MCF 10A (cell line): ENCODE measurements at regions of chr12 and their contacts with region 1.

Region 1: GRCh38 chr12:82685790-82686167 is 927 bp upstream of the TMTC2 start:
- DNase-seq: peak; percentile 96
- H3K4me3 Mint-ChIP-seq: peak overlapping the region; percentile 85
- H3K27ac Mint-ChIP-seq: no peak overlapping the region
- H3K4me1 Mint-ChIP-seq: peaks cover 16% of the 10 kb centered on the region
- H3K27me3 Mint-ChIP-seq: no peaks in the 10 kb centered on the region
- CTCF ChIP-seq: peak; percentile 77

Region 2: GRCh38 chr12:82645414-82645813 is 40.4 kb before region 1 on chr12:
- CTCF ChIA-PET with region 1: interaction called, 12 read pairs
- POLR2A ChIA-PET with region 1: interaction called, 4 read pairs
- intact Hi-C with region 1: no loop called
- DNase-seq: no peak
- H3K4me3 Mint-ChIP-seq: no peak overlapping the region
- H3K27ac Mint-ChIP-seq: no peak overlapping the region
- H3K4me1 Mint-ChIP-seq: peaks cover 9% of the 10 kb centered on the region
- H3K27me3 Mint-ChIP-seq: no peaks in the 10 kb centered on the region
- CTCF ChIP-seq: no peak

Region 3: DNA sequence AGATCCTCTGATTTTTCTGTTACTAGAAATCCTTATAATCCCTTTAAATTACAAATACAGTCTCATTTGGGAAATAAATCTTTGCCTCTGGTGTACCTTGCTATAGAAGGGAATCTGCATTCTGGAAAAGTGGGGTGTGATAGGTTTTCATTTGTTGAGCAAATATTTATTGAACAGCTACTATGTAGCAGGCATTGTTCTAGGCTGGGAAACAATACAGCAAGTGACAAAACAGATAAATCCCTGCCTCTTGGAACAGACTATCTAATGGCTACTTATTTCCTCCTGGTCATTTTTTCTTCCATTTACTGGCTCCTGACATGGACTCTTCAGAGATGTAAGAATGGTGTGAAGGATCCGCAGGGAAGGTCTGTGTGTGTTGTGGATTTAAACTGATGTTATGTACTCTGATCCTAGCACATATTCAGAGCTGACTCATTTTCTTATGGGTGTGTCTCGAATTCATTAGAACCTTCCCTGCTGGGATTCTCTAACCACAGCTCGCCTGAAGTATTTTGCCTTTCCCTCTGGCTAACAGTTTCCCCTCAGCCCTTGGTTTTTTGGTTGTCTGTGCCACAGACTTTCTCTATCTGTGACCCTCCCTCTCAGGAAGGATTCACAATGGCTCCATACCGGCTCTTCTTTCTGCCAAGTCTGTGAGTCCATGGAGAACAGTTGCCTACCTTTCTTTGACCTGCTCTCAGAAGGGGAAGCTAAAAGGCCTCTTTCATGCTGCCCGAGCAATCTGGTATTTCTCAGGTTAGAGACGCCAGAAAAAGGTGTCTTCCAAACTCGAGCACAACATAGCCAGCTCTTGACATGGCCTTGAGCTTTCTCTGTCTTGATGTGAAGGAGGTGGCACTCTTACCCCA is 54.6 kb after region 1 on chr12:
- CTCF ChIA-PET with region 1: interaction called, 15 read pairs
- POLR2A ChIA-PET with region 1: interaction called, 9 read pairs
- intact Hi-C with region 1: no loop called
- DNase-seq: peak; percentile 78
- H3K4me3 Mint-ChIP-seq: no peak overlapping the region
- H3K27ac Mint-ChIP-seq: peak overlapping the region; percentile 88
- H3K4me1 Mint-ChIP-seq: peaks cover 12% of the 10 kb centered on the region
- H3K27me3 Mint-ChIP-seq: no peaks in the 10 kb centered on the region
- CTCF ChIP-seq: no peak

Region 4: DNA sequence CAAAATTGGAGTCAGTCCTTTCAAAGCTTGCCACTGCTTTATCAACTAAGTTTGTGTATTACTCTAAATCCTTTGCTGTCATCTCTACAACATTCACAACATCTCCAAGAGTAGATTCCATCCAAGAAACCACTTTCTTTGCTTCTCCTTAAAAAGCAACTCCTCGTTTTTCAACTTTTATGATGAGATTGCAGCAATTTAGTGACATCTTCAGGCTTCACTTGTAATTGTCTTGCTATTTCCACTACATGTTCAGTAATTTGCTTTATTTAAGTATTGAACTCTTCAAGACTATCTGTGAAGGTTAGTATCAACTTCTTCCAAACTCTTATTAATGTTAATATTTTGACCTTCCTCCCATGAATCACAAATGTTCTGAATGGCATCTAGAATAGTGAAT is 748.8 kb after region 1 on chr12:
- CTCF ChIA-PET with region 1: interaction called, 6 read pairs
- POLR2A ChIA-PET with region 1: no interaction called
- intact Hi-C with region 1: loop called (anchors 10 kb)
- DNase-seq: peak; percentile 2
- H3K4me3 Mint-ChIP-seq: no peak overlapping the region
- H3K27ac Mint-ChIP-seq: no peak overlapping the region
- H3K4me1 Mint-ChIP-seq: no peaks in the 10 kb centered on the region
- H3K27me3 Mint-ChIP-seq: no peaks in the 10 kb centered on the region
- CTCF ChIP-seq: no peak

Region 5: DNA sequence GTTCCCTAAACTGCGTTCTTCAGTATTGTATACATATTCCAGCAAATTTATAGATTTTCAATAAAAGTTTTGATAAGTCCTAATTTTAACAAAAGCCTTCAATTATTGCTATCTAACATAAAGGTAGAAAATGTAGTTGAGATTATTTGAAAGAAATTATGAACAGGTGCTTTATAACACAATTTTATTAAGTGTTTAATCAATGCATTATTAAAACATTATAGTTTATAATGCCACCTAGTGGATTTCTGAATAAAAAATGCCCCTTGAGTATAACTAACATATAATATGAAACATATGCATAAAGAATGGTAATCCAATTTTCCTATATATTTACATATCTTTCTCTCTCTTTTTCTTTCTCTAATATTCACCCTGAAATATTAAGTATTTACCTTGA is 1711.5 kb after region 1 on chr12:
- CTCF ChIA-PET with region 1: interaction called, 14 read pairs
- POLR2A ChIA-PET with region 1: no interaction called
- intact Hi-C with region 1: loop called (anchors 2 kb)
- DNase-seq: peak; percentile 12
- H3K4me3 Mint-ChIP-seq: no peak overlapping the region
- H3K27ac Mint-ChIP-seq: no peak overlapping the region
- H3K4me1 Mint-ChIP-seq: no peaks in the 10 kb centered on the region
- H3K27me3 Mint-ChIP-seq: no peaks in the 10 kb centered on the region
- CTCF ChIP-seq: peak; percentile 36